Gastrocnemius medialis (tissue), 4 donors: ENCODE measurements at regions of chr19 and their contacts with region 1.

Region 1: GRCh38 chr19:34178274-34178610 is 5.9 kb downstream of the LSM14A start:
- DNase-seq: no peak
- ATAC-seq: no peak
- H3K4me3 ChIP-seq: no peak overlapping the region
- H3K27ac ChIP-seq: peak overlapping the region in 1 of 4 donors; percentile 98
- H3K4me1 ChIP-seq: peaks cover 75 to 78% of the 10 kb centered on the region in 2 donors
- H3K27me3 ChIP-seq: no peaks in the 10 kb centered on the region
- CTCF ChIP-seq: no peak
- POLR2A ChIP-seq: no peak

Region 2: DNA sequence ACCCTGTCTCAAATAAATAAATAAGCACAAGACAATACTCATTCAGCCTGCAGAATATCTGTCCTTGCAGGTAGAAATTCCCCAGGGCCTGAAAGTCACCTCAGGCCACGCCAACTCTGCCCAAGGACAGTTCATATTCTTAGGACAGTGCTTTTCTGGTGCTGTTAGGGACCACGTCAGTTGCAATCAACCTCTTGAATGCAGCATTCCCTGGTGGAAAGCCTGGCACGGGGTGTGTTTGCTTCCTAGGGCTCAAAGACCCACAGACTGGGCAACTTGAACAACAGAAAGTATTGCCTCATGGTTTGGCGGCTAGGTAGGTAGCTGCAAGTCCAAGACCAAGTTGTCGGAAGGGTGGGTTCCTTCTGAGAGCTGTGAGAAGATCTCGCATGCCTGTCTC is 221.3 kb before region 1 on chr19:
- in situ Hi-C with region 1: no loop called
- intact Hi-C with region 1: no loop called
- DNase-seq: no peak
- ATAC-seq: no peak
- H3K4me3 ChIP-seq: no peak overlapping the region
- H3K27ac ChIP-seq: no peak overlapping the region
- H3K4me1 ChIP-seq: no peaks in the 10 kb centered on the region
- H3K27me3 ChIP-seq: no peaks in the 10 kb centered on the region
- CTCF ChIP-seq: no peak
- POLR2A ChIP-seq: no peak

Region 3: GRCh38 chr19:34220472-34221063 is 42.3 kb after region 1 on chr19:
- in situ Hi-C with region 1: no loop called
- intact Hi-C with region 1: loop called (anchors 5 kb)
- DNase-seq: peak in 1 of 2 donors; percentile 42
- ATAC-seq: no peak
- H3K4me3 ChIP-seq: no peak overlapping the region
- H3K27ac ChIP-seq: peak overlapping the region in 1 of 4 donors; percentile 8
- H3K4me1 ChIP-seq: peaks cover 9% of the 10 kb centered on the region in 2 donors
- H3K27me3 ChIP-seq: no peaks in the 10 kb centered on the region
- CTCF ChIP-seq: peak; percentile 44 to 70 (median 58)
- POLR2A ChIP-seq: no peak